A549 (cell line): ENCODE measurements at regions of chr1 and their contacts with region 1.

Region 1: GRCh38 chr1:37859507-37860345 is at the start of gene MTF1:
- DNase-seq: peak; percentile 92 to 93
- ATAC-seq: peak; percentile 98
- H3K4me3 ChIP-seq: peak within 1 kb of the TSS; percentile 79
- H3K27ac ChIP-seq: peak within 1 kb of the TSS; percentile 93 to 96
- H3K4me1 ChIP-seq: peaks cover 34% of the 10 kb centered on the region
- CTCF ChIP-seq: peak; percentile 66
- EP300 ChIP-seq: no peak
- POLR2A ChIP-seq: peak; percentile 85
- RAD21 ChIP-seq: peak; percentile 55 to 56
- polyA plus RNA-seq, gene MTF1: 6.7 and 9.5 TPM in 2 replicates

Region 2: GRCh38 chr1:37708471-37708870 is 151.3 kb before region 1 on chr1:
- CTCF ChIA-PET with region 1: no interaction called
- POLR2A ChIA-PET with region 1: no interaction called
- DNase-seq: no peak
- ATAC-seq: no peak
- H3K4me3 ChIP-seq: no peak overlapping the region
- H3K27ac ChIP-seq: no peak overlapping the region
- H3K4me1 ChIP-seq: no peaks in the 10 kb centered on the region
- CTCF ChIP-seq: no peak
- EP300 ChIP-seq: no peak
- POLR2A ChIP-seq: no peak
- RAD21 ChIP-seq: no peak

Region 3: GRCh38 chr1:37807555-37808368 is 52.0 kb before region 1 on chr1 and contains the starts of genes C1orf122 and YRDC:
- CTCF ChIA-PET with region 1: interaction called, 7 read pairs
- POLR2A ChIA-PET with region 1: interaction called, 14 read pairs
- DNase-seq: peak; percentile 90 to 92
- ATAC-seq: peak; percentile 91 to 93
- H3K4me3 ChIP-seq: peak within 1 kb of the TSS; percentile 99
- H3K27ac ChIP-seq: peak within 1 kb of the TSS; percentile 99 to 100
- H3K4me1 ChIP-seq: peaks cover 32% of the 10 kb centered on the region; the same call in 2 of the 3 replicates
- CTCF ChIP-seq: no peak
- EP300 ChIP-seq: no peak
- POLR2A ChIP-seq: peak; percentile 69
- RAD21 ChIP-seq: no peak
- polyA plus RNA-seq, gene C1orf122: 21.3 and 24.2 TPM in 2 replicates
- polyA plus RNA-seq, gene YRDC: 21.0 and 21.7 TPM in 2 replicates

Region 4: GRCh38 chr1:37846647-37847339 is 12.9 kb before region 1 on chr1:
- CTCF ChIA-PET with region 1: interaction called, 29 read pairs
- POLR2A ChIA-PET with region 1: interaction called, 4 read pairs
- DNase-seq: no peak
- ATAC-seq: no peak
- H3K4me3 ChIP-seq: no peak overlapping the region
- H3K27ac ChIP-seq: no peak overlapping the region
- H3K4me1 ChIP-seq: peaks cover 23% of the 10 kb centered on the region
- CTCF ChIP-seq: no peak
- EP300 ChIP-seq: no peak
- POLR2A ChIP-seq: no peak
- RAD21 ChIP-seq: no peak